ENCODE measurements at regions of chr10 and their contacts with region 1.

Region 1: DNA sequence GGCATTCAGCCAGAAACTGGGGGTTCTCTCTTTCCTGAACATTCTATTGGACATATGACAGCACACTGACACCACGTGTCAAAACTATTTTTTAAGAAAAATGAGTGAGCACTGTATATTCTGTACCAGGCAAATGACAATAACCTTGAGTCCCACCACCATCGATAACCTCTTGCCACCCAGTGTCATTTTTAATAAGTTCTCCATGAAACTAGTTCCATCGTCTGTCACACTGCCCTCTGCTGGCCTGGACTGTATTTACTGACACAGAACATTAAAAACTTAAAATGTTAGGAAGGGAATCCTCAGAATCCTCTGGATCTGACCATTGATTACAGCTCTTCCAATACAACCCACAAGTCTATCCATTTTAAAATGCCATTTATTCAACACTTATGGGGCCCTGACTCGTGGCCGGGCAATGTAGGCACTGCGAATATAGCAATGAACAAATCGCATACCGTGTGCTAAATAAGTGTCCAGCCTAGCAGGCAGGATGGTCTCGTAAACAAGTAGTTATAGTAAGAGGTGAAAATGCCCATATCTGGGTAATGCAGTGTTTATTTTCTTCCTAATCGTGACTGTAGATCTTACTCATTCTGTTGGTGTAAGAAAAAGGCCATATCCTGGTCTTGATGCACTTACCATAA is 35.9 kb upstream of the CACNB2 start:
- DNase-seq: peak; percentile 64
- H3K4me3 ChIP-seq: no peak overlapping the region
- H3K27ac ChIP-seq: no peak overlapping the region
- H3K4me1 ChIP-seq: no peaks in the 10 kb centered on the region
- H3K27me3 ChIP-seq: no peaks in the 10 kb centered on the region
- CTCF ChIP-seq: peak; percentile 63

Region 2: GRCh38 chr10:17910125-17910789 is 194.1 kb before region 1 on chr10:
- intact Hi-C with region 1: loop called (anchors 10 kb)
- DNase-seq: peak; percentile 61
- H3K4me3 ChIP-seq: no peak overlapping the region
- H3K27ac ChIP-seq: no peak overlapping the region
- H3K4me1 ChIP-seq: no peaks in the 10 kb centered on the region
- H3K27me3 ChIP-seq: no peaks in the 10 kb centered on the region
- CTCF ChIP-seq: peak; percentile 45

Region 3: GRCh38 chr10:18204039-18204835 is 99.9 kb after region 1 on chr10:
- intact Hi-C with region 1: loop called (anchors 10 kb)
- DNase-seq: no peak
- H3K4me3 ChIP-seq: no peak overlapping the region
- H3K27ac ChIP-seq: no peak overlapping the region
- H3K4me1 ChIP-seq: no peaks in the 10 kb centered on the region
- H3K27me3 ChIP-seq: no peaks in the 10 kb centered on the region
- CTCF ChIP-seq: no peak

Region 4: DNA sequence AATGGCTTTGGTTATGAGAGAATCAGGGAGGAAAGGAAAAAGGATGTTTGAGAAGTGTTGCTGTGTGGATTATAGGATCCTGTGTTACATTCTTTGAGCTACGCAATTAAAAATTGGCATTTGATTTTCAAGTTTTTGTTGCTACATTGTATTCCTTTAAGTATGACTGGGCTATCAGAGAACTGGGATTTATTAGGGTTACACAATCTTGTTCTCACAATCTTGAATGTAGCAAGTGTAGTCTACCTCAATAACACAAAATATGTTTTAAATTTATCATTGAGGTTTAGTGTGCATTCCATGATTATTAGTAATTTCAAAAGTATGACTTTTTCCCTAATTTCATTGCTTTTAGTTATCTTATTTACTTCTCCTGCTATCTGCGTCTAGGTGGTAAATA is 149.7 kb after region 1 on chr10:
- intact Hi-C with region 1: no loop called
- DNase-seq: no peak
- H3K4me3 ChIP-seq: no peak overlapping the region
- H3K27ac ChIP-seq: no peak overlapping the region
- H3K4me1 ChIP-seq: no peaks in the 10 kb centered on the region
- H3K27me3 ChIP-seq: no peaks in the 10 kb centered on the region
- CTCF ChIP-seq: no peak

Measured in colonic mucosa (tissue), 4 donors.